ENCODE measurements at regions of chr13 and their contacts with region 1.

Region 1: GRCh38 chr13:31199849-31200636 is at the start of gene B3GLCT:
- DNase-seq: peak; percentile 78 to 85 (median 80)
- ATAC-seq: peak; percentile 90
- H3K4me3 ChIP-seq: peak within 1 kb of the TSS; percentile 63
- H3K27ac ChIP-seq: peak within 1 kb of the TSS; percentile 70; the same call in 2 of the 3 replicates
- H3K4me1 ChIP-seq: peaks cover 13 to 15% of the 10 kb centered on the region in 2 experiments; a peak in 4 of 5 replicates
- H3K27me3 ChIP-seq: no peaks in the 10 kb centered on the region; a peak in 1 of 5 replicates
- CTCF ChIP-seq: peak; percentile 59 to 87 (median 71)
- EP300 ChIP-seq: no peak
- POLR2A ChIP-seq: no peak
- RAD21 ChIP-seq: peak; percentile 23 to 42; a peak in 3 of 4 replicates
- polyA plus RNA-seq, gene B3GLCT: 1.1 to 1.5 TPM

Region 2: DNA sequence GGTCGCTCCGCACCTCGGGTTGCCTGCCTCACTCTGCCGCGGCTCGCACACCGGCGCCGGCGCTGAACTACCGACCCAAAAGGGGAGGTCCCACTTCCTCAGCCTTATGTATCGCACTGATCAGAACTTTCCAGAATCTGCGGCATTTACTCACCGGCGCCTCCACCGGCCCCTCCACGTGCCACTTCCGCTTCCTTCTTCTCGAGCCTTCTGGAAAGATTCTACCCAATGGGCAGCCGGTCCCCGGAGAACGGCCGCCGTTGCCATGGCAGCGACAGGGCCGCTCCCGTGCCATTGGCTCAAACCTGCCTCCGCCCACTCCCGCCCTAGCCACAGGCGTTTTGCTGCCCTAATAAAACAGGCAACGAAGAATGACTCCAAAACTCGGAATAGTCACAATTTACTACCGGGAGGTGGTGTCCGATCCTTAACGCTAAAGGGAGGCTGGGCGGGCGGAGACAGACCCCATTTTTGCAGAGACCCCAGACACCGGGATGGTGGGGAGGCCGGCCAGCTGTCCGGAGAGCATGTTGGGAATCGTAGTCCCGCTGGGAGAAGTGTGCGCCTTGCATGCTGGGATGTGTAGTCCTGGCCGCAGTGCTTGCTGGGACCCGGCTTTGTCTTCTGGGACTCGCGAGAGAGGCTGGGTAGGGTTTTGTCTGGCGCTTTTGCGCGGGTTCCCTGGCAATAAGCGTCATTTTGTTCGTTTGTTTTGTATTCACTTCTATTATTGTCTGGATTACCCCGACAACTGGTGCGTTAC is 38.0 kb before region 1 on chr13 and contains the start of gene HSPH1:
- CTCF ChIA-PET with region 1: no interaction called
- POLR2A ChIA-PET with region 1: interaction called, 5 read pairs
- in situ Hi-C with region 1: no loop called
- intact Hi-C with region 1: loop called (anchors 5 kb)
- DNase-seq: peak; percentile 92 to 96 (median 94)
- ATAC-seq: peak; percentile 93
- H3K4me3 ChIP-seq: peak within 1 kb of the TSS; percentile 85
- H3K27ac ChIP-seq: peak within 1 kb of the TSS; percentile 93
- H3K4me1 ChIP-seq: peaks cover 0 to 12% of the 10 kb centered on the region in 2 experiments; a peak in 1 of 5 replicates
- H3K27me3 ChIP-seq: no peaks in the 10 kb centered on the region
- CTCF ChIP-seq: peak in 2 of 3 experiments; percentile 31 to 34; a peak in 1 of 6 replicates
- EP300 ChIP-seq: peak; percentile 35; the same call in 1 of the 2 replicates
- POLR2A ChIP-seq: peak; percentile 59
- RAD21 ChIP-seq: no peak
- polyA plus RNA-seq, gene HSPH1: 34.6 to 53.4 TPM

Region 3: DNA sequence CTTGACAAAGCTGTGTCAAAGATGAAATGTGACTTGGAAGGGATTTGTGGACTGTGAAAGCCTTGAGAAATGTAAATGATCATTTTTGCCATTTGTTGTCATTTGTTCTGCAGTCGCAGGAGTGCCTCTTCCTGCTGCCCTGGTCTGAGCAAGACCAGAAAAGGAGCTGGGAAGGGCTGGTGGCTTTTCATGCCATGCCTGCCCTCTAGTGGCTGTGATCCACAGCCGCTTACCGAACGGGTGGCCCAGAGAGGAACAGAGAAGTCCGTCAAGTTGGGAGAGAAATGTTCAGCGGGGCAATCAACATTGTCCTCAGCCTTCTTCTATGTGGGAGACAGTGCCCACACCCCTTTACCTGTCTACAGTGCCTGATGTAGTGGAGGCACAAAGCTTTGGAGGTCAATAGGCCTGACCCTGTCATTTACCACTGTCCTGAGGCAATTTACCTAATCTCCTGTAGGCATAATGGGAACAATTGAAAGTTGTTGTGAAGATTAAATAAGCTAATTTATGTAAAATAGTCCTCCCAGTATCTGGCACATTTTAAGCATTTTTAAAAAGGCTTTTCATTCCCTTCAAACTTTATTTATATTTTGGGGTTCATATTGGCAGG is 224.2 kb after region 1 on chr13:
- CTCF ChIA-PET with region 1: no interaction called
- POLR2A ChIA-PET with region 1: no interaction called
- in situ Hi-C with region 1: no loop called
- intact Hi-C with region 1: loop called (anchors 10 kb)
- DNase-seq: peak; percentile 43 to 69 (median 56)
- ATAC-seq: peak; percentile 98
- H3K4me3 ChIP-seq: no peak overlapping the region
- H3K27ac ChIP-seq: no peak overlapping the region
- H3K4me1 ChIP-seq: no peaks in the 10 kb centered on the region
- H3K27me3 ChIP-seq: no peaks in the 10 kb centered on the region; a peak in 1 of 5 replicates
- CTCF ChIP-seq: peak; percentile 74 to 78 (median 76)
- EP300 ChIP-seq: no peak
- POLR2A ChIP-seq: no peak
- RAD21 ChIP-seq: peak; percentile 56 to 72

Measured in K562 (cell line).